ENCODE measurements at regions of chr4 and their contacts with region 1.

Region 1: GRCh38 chr4:55068522-55068921 is 56.9 kb downstream of the KDR start:
- DNase-seq: no peak
- H3K4me3 ChIP-seq: no peak overlapping the region
- H3K27ac ChIP-seq: no peak overlapping the region
- H3K4me1 ChIP-seq: no peaks in the 10 kb centered on the region
- H3K27me3 ChIP-seq: no peaks in the 10 kb centered on the region
- CTCF ChIP-seq: no peak
- EP300 ChIP-seq: no peak
- POLR2A ChIP-seq: no peak

Region 2: DNA sequence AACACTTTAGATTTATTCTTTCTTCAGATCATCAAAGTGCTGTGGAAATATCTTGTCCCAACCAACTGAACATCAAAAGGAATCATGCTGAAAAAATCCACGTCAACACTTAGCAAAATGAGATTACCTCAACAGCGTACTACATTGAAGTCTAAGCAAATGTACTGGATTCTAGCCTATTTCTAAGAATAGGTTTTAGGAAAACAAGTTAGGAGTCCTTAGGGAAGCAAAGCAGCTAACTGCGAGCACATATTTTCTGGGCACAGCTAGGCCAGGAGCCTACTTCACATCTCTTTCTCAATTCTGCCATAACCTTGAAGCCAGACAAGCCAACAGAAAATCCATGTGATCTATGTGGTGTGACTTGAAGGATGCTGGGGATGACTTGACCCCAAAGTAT is 34.7 kb after region 1 on chr4:
- intact Hi-C with region 1: loop called in 1 of 4 experiments (anchors 2 kb)
- DNase-seq: no peak
- H3K4me3 ChIP-seq: no peak overlapping the region
- H3K27ac ChIP-seq: no peak overlapping the region
- H3K4me1 ChIP-seq: no peaks in the 10 kb centered on the region
- H3K27me3 ChIP-seq: no peaks in the 10 kb centered on the region
- CTCF ChIP-seq: no peak
- EP300 ChIP-seq: no peak
- POLR2A ChIP-seq: no peak

Region 3: DNA sequence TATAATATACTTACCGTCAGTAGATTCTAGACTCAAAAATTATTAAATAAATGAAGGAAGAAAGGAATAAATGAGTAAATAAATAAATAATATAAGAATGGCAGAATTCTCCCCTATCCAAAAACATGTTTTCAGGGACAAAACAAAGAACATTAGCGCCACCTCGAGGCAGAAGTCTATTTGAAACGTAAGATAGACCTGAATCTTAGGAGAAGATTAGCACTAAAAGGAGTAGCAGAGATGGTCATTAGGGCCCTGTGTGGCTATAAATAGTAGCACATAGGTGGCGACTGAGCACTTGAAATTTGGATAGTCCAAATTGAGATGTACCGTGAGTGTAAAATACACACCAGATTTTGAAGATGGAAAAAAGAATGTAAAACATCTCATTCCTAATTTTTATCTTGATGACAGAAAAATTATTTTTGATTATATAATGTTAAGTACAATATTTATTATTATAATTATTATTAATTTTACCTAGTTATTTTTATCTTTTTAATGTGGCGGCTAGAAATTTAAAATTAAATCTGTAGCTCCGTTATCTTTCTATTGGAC is 253.3 kb after region 1 on chr4:
- intact Hi-C with region 1: no loop called
- DNase-seq: peak; percentile 44 to 80 (median 59)
- H3K4me3 ChIP-seq: no peak overlapping the region
- H3K27ac ChIP-seq: no peak overlapping the region
- H3K4me1 ChIP-seq: no peaks in the 10 kb centered on the region
- H3K27me3 ChIP-seq: no peaks in the 10 kb centered on the region
- CTCF ChIP-seq: peak in 2 of 3 donors; percentile 33 to 58
- EP300 ChIP-seq: no peak
- POLR2A ChIP-seq: no peak